IMR-90 (cell line): ENCODE measurements at regions of chr6 and their contacts with region 1.

Region 1: DNA sequence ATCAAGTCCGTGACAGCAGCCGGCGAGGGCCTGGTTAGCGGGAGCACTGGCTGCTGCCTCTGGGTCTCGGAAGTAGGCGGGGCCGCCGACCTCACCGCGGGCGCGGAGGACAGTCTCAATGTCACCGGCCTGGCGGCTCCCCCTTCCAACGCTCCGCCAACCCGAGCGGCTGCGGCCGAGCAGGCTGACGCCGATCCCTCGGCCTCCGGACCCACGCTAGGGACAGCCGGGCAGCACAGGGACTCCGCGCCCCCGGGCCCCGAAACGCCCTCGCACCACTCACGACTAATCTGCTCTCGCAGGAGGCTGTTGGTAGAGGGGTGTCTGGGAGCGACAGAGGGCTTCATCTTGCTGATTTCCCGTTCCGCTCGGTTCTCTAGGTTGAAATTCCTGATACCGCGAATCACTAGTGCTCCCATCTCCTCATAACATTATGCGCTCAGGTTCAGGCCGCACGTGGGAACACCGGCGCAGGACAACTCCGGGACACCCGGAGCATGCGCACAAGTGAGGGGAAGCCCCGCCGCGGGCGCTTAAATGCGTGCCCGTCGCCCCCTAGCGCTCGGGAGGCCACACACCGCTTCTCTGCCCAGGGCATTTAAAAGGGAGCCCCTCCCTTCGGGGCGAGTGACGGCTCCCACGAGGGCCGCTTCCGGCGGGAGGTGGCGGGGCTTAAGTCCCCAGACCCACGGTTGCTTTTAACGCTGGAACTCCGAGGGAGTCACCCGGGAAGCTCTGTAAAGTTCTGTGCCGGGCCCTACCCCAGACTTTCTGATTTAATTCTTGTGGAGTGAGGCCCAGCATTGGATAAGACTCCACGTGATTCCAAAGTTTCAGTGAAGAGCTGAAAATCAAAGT is at the start of gene NDUFAF4:
- DNase-seq: peak; percentile 90
- ATAC-seq: peak; percentile 96
- H3K4me3 ChIP-seq: peak within 1 kb of the TSS; percentile 78
- H3K27ac ChIP-seq: peak within 1 kb of the TSS; percentile 85
- H3K4me1 ChIP-seq: no peaks in the 10 kb centered on the region
- H3K27me3 ChIP-seq: no peaks in the 10 kb centered on the region; the same call in 1 of the 2 replicates
- CTCF ChIP-seq: peak; percentile 99
- POLR2A ChIP-seq: peak; percentile 77
- RAD21 ChIP-seq: peak; percentile 64
- total RNA-seq, gene NDUFAF4: 6.3 and 13.9 TPM in 2 replicates

Region 2: GRCh38 chr6:96542702-96543101 is 354.9 kb before region 1 on chr6:
- CTCF ChIA-PET with region 1: no interaction called
- POLR2A ChIA-PET with region 1: no interaction called
- dilution Hi-C with region 1: no loop called
- in situ Hi-C with region 1: no loop called
- intact Hi-C with region 1: loop called (anchors 5 kb)
- DNase-seq: no peak
- ATAC-seq: no peak
- H3K4me3 ChIP-seq: no peak overlapping the region
- H3K27ac ChIP-seq: no peak overlapping the region
- H3K4me1 ChIP-seq: no peaks in the 10 kb centered on the region
- H3K27me3 ChIP-seq: no peaks in the 10 kb centered on the region
- CTCF ChIP-seq: peak; percentile 33
- POLR2A ChIP-seq: no peak
- RAD21 ChIP-seq: peak; percentile 38; the same call in 1 of the 2 replicates

Region 3: DNA sequence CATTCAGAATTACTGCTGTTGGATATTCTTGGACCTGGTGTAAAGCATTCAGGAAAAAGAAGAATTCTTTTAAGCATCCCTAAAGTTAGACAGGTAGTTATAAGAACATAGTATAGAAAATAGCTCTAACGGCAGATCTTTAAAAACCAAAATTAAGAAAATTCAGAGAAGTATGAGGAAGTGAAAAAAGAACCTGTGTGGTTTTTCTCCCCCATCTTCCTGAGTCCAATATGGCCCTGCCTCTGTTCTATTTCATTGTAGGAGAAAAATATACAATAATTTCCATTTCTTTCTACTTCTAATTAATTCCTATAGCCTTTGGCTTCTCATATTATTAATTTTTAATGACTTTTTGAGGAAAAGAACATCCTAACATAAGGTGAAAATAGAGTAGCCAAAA is 287.6 kb before region 1 on chr6:
- CTCF ChIA-PET with region 1: no interaction called
- POLR2A ChIA-PET with region 1: no interaction called
- dilution Hi-C with region 1: no loop called
- in situ Hi-C with region 1: no loop called
- intact Hi-C with region 1: no loop called
- DNase-seq: no peak
- ATAC-seq: no peak
- H3K4me3 ChIP-seq: no peak overlapping the region
- H3K27ac ChIP-seq: no peak overlapping the region
- H3K4me1 ChIP-seq: no peaks in the 10 kb centered on the region
- H3K27me3 ChIP-seq: no peaks in the 10 kb centered on the region
- CTCF ChIP-seq: no peak
- POLR2A ChIP-seq: no peak
- RAD21 ChIP-seq: no peak

Region 4: DNA sequence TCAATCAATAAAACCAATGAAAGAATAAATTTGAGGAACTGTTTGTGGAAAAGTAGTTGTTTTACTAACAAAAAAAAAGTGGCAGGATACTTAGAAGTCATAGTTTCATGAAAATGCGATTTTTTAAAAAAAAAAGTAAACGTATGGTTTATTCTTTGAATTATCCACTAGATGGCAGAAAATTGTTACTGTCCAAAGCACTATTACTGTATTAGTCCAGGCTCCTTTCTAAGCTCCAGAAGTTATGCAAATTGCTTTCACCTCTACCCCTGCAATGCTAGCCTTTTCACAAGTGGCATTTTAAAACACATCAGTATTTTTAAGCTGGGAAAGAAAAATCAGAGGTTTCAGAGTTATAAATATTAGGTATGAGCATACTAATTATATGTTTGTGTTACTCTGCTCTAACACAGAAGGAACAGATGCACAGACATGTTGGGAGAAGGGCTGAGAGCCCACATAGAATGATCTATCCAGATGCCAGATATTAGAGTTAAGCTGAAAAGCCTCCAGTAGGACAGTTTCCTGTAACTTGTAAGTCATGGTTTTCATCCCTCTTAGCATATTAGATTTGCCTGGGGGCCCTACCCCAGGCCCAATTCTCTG is 270.8 kb before region 1 on chr6:
- CTCF ChIA-PET with region 1: interaction called, 9 read pairs
- POLR2A ChIA-PET with region 1: no interaction called
- dilution Hi-C with region 1: no loop called
- in situ Hi-C with region 1: loop called (anchors 10 kb)
- intact Hi-C with region 1: loop called (anchors 1 kb)
- DNase-seq: peak; percentile 38
- ATAC-seq: peak; percentile 85
- H3K4me3 ChIP-seq: no peak overlapping the region
- H3K27ac ChIP-seq: no peak overlapping the region
- H3K4me1 ChIP-seq: no peaks in the 10 kb centered on the region
- H3K27me3 ChIP-seq: no peaks in the 10 kb centered on the region
- CTCF ChIP-seq: peak; percentile 52
- POLR2A ChIP-seq: no peak
- RAD21 ChIP-seq: peak; percentile 53

Region 5: DNA sequence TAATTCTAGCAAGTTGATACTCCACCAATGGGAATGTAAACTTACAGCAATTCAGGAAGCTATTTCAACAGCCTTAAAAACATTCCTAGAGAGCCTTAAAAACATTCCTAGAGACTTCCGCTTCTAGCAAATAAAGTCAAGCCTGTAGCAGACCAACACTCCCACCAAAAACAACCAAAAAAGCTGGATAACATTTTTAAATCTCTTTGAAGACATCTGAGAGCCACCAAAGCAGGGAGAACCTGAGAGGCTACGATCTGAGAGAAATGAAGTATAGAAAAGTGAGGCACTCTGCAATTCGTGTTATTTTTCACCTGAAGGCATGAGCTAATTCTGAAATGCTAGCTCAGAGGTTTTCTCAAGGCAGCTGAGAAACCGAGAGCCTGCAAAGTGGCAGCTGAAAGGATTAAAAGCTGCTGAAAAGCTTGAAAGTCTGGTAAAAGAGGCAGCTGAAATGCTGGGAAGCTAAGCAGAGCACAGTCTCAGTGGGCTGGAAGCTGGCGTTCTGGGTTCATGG is 81.3 kb before region 1 on chr6:
- CTCF ChIA-PET with region 1: no interaction called
- POLR2A ChIA-PET with region 1: no interaction called
- dilution Hi-C with region 1: no loop called
- in situ Hi-C with region 1: no loop called
- intact Hi-C with region 1: loop called (anchors 5 kb)
- DNase-seq: peak; percentile 48
- ATAC-seq: peak; percentile 74
- H3K4me3 ChIP-seq: no peak overlapping the region
- H3K27ac ChIP-seq: peak overlapping the region; percentile 41; the same call in 1 of the 2 replicates
- H3K4me1 ChIP-seq: peaks cover 6% of the 10 kb centered on the region
- H3K27me3 ChIP-seq: no peaks in the 10 kb centered on the region
- CTCF ChIP-seq: no peak
- POLR2A ChIP-seq: no peak
- RAD21 ChIP-seq: no peak

Region 6: DNA sequence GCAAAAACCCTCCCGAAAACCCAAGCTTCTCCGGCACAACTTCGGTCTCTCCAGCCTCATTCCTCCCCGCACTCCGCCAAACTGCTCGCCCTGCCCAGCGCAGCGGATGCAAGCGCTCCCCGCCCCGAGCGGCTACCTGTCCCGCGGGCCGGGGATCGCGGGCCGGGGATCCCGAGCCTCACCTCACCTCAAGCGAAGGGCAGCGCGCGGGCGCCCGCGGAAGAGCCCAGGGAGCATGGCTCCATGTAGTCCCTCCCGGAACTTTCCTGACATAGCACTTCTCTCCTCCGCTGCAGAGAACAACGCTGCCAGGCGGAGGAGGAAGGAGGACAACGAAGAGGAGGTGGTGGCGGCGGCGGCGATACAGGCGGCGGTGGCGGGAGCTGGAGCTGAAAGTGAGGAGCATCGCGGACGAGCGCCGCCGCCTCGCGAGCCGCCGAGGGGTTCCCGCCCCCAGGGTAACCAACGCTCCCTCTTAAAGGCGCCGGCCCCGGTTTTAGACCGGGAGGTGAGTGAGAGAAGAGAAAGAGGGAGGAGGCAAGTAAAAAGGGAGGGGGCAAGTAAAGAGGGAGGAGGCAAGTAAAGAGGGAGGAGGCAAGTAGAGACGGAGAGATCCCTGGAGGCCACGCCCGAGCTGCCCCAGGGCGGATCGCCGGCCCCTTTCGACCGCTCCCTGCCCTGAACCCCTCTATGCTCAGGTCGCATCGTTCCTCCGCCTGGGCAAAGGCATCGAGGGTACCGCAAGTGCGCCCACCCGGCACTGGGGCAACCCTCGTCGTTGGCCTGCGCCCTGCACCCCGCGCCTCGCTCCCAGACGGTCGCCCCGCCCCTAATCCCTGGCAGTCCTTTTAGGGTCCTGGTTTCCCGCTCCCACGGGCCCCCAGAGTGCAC is 60.3 kb before region 1 on chr6 and contains the start of gene GPR63:
- CTCF ChIA-PET with region 1: interaction called, 3 read pairs
- POLR2A ChIA-PET with region 1: no interaction called
- dilution Hi-C with region 1: no loop called
- in situ Hi-C with region 1: no loop called
- intact Hi-C with region 1: loop called (anchors 1 kb)
- DNase-seq: peak; percentile 52
- ATAC-seq: peak; percentile 93
- H3K4me3 ChIP-seq: peak within 1 kb of the TSS; percentile 87
- H3K27ac ChIP-seq: peak within 1 kb of the TSS; percentile 18; the same call in 1 of the 2 replicates
- H3K4me1 ChIP-seq: no peaks in the 10 kb centered on the region
- H3K27me3 ChIP-seq: peaks cover 8% of the 10 kb centered on the region; the same call in 1 of the 2 replicates
- CTCF ChIP-seq: no peak
- POLR2A ChIP-seq: no peak
- RAD21 ChIP-seq: no peak
- total RNA-seq, gene GPR63: 0.36 and 0.56 TPM in 2 replicates

Region 7: DNA sequence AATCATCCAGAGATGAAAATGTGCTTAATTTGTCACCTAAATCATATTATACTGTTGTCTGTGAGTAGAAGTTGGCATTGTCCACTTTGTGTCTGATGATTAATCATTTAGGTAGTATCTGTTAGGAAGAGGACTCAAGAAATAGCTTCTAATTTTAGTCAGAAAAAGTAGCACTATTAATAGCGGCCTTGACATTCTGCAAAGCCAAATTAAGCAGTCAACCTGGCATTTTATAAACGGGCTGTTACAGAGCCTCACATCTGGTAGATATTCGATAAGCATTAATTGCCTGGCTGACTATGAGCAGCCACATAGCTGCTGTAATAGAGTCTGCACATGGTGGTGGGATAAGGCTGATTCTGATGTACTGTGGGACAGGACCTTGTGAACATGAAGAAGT is 126.4 kb after region 1 on chr6:
- CTCF ChIA-PET with region 1: no interaction called
- POLR2A ChIA-PET with region 1: no interaction called
- dilution Hi-C with region 1: no loop called
- in situ Hi-C with region 1: no loop called
- intact Hi-C with region 1: no loop called
- DNase-seq: no peak
- ATAC-seq: no peak
- H3K4me3 ChIP-seq: no peak overlapping the region
- H3K27ac ChIP-seq: no peak overlapping the region
- H3K4me1 ChIP-seq: no peaks in the 10 kb centered on the region
- H3K27me3 ChIP-seq: no peaks in the 10 kb centered on the region
- CTCF ChIP-seq: no peak
- POLR2A ChIP-seq: no peak
- RAD21 ChIP-seq: no peak

Region 8: GRCh38 chr6:97053643-97054411 is 156.2 kb after region 1 on chr6:
- CTCF ChIA-PET with region 1: interaction called, 5 read pairs
- POLR2A ChIA-PET with region 1: no interaction called
- dilution Hi-C with region 1: no loop called
- in situ Hi-C with region 1: loop called (anchors 5 kb)
- intact Hi-C with region 1: loop called (anchors 1 kb)
- DNase-seq: peak; percentile 34
- ATAC-seq: peak; percentile 42; the same call in 1 of the 2 replicates
- H3K4me3 ChIP-seq: no peak overlapping the region
- H3K27ac ChIP-seq: no peak overlapping the region
- H3K4me1 ChIP-seq: no peaks in the 10 kb centered on the region
- H3K27me3 ChIP-seq: no peaks in the 10 kb centered on the region
- CTCF ChIP-seq: peak; percentile 66
- POLR2A ChIP-seq: no peak
- RAD21 ChIP-seq: peak; percentile 51

Region 9: GRCh38 chr6:97059473-97059872 is 161.9 kb after region 1 on chr6:
- CTCF ChIA-PET with region 1: interaction called, 5 read pairs
- POLR2A ChIA-PET with region 1: no interaction called
- dilution Hi-C with region 1: no loop called
- in situ Hi-C with region 1: loop called (anchors 5 kb)
- intact Hi-C with region 1: loop called (anchors 1 kb)
- DNase-seq: peak; percentile 37
- ATAC-seq: peak; percentile 76
- H3K4me3 ChIP-seq: no peak overlapping the region
- H3K27ac ChIP-seq: no peak overlapping the region
- H3K4me1 ChIP-seq: no peaks in the 10 kb centered on the region
- H3K27me3 ChIP-seq: peaks cover 4% of the 10 kb centered on the region
- CTCF ChIP-seq: peak; percentile 60
- POLR2A ChIP-seq: no peak
- RAD21 ChIP-seq: peak; percentile 64

Region 10: GRCh38 chr6:97437087-97437486 is 539.5 kb after region 1 on chr6:
- CTCF ChIA-PET with region 1: no interaction called
- POLR2A ChIA-PET with region 1: no interaction called
- dilution Hi-C with region 1: no loop called
- in situ Hi-C with region 1: no loop called
- intact Hi-C with region 1: no loop called
- DNase-seq: peak; percentile 18
- ATAC-seq: peak; percentile 62; the same call in 1 of the 2 replicates
- H3K4me3 ChIP-seq: no peak overlapping the region
- H3K27ac ChIP-seq: no peak overlapping the region
- H3K4me1 ChIP-seq: no peaks in the 10 kb centered on the region
- H3K27me3 ChIP-seq: no peaks in the 10 kb centered on the region
- CTCF ChIP-seq: peak; percentile 64
- POLR2A ChIP-seq: no peak
- RAD21 ChIP-seq: peak; percentile 42